IMR-90 (cell line): ENCODE measurements at regions of chr1 and their contacts with region 1.

Region 1: GRCh38 chr1:99707535-99708142 is 58.8 kb downstream of the FRRS1 start:
- DNase-seq: peak; percentile 65
- ATAC-seq: peak; percentile 97
- H3K4me3 ChIP-seq: no peak overlapping the region
- H3K27ac ChIP-seq: no peak overlapping the region
- H3K4me1 ChIP-seq: no peaks in the 10 kb centered on the region
- H3K27me3 ChIP-seq: no peaks in the 10 kb centered on the region
- CTCF ChIP-seq: peak; percentile 94
- POLR2A ChIP-seq: 0 out of 2 replicates have a peak, but pooled peaks have one; percentile 31
- RAD21 ChIP-seq: peak; percentile 98

Region 2: DNA sequence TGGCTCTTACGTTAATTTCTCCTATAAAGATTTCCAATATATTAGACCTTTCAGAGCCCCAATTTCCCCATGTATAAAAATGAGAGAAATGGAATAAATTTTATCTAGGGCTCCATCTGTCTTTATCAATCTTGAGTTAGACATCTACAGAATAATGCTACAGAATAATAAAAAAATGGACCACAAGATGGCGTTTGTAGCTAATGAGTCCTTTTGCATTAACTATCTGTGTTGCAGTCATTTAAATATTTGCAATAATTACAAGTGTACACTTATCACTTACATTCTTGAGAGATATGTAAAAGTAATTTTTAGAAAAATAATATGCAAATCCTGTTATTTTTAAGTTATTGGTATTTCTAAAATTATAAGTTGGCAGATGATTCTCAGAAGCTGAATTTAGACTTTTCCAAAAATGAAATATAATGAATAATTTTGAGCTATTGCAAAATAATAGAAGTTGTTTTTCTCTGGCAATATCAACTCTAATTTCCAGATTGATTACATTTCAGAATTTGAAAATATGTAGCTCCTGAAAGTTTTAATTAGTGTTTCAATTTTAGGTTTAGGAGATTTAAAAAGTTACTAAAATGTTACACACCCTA is 958.4 kb before region 1 on chr1:
- CTCF ChIA-PET with region 1: interaction called, 3 read pairs
- POLR2A ChIA-PET with region 1: no interaction called
- dilution Hi-C with region 1: no loop called
- in situ Hi-C with region 1: no loop called
- intact Hi-C with region 1: loop called (anchors 2 kb)
- DNase-seq: peak; percentile 7
- ATAC-seq: no peak; the same call in 1 of the 2 replicates
- H3K4me3 ChIP-seq: no peak overlapping the region
- H3K27ac ChIP-seq: no peak overlapping the region
- H3K4me1 ChIP-seq: no peaks in the 10 kb centered on the region
- H3K27me3 ChIP-seq: no peaks in the 10 kb centered on the region
- CTCF ChIP-seq: peak; percentile 48
- POLR2A ChIP-seq: no peak
- RAD21 ChIP-seq: peak; percentile 39; the same call in 1 of the 2 replicates

Region 3: GRCh38 chr1:98794196-98794886 is 913.3 kb before region 1 on chr1:
- CTCF ChIA-PET with region 1: no interaction called
- POLR2A ChIA-PET with region 1: no interaction called
- dilution Hi-C with region 1: no loop called
- in situ Hi-C with region 1: loop called (anchors 10 kb)
- intact Hi-C with region 1: loop called (anchors 2 kb)
- DNase-seq: peak; percentile 72
- ATAC-seq: peak; percentile 95
- H3K4me3 ChIP-seq: no peak overlapping the region
- H3K27ac ChIP-seq: no peak overlapping the region
- H3K4me1 ChIP-seq: no peaks in the 10 kb centered on the region
- H3K27me3 ChIP-seq: peaks cover 5% of the 10 kb centered on the region
- CTCF ChIP-seq: peak; percentile 81
- POLR2A ChIP-seq: no peak
- RAD21 ChIP-seq: peak; percentile 85

Region 4: GRCh38 chr1:98884864-98885263 is 822.8 kb before region 1 on chr1:
- CTCF ChIA-PET with region 1: no interaction called
- POLR2A ChIA-PET with region 1: no interaction called
- dilution Hi-C with region 1: no loop called
- in situ Hi-C with region 1: no loop called
- intact Hi-C with region 1: loop called (anchors 10 kb)
- DNase-seq: no peak
- ATAC-seq: no peak
- H3K4me3 ChIP-seq: no peak overlapping the region
- H3K27ac ChIP-seq: no peak overlapping the region
- H3K4me1 ChIP-seq: no peaks in the 10 kb centered on the region
- H3K27me3 ChIP-seq: no peaks in the 10 kb centered on the region
- CTCF ChIP-seq: no peak
- POLR2A ChIP-seq: no peak
- RAD21 ChIP-seq: 0 out of 2 replicates have a peak, but pooled peaks have one; percentile 12

Region 5: DNA sequence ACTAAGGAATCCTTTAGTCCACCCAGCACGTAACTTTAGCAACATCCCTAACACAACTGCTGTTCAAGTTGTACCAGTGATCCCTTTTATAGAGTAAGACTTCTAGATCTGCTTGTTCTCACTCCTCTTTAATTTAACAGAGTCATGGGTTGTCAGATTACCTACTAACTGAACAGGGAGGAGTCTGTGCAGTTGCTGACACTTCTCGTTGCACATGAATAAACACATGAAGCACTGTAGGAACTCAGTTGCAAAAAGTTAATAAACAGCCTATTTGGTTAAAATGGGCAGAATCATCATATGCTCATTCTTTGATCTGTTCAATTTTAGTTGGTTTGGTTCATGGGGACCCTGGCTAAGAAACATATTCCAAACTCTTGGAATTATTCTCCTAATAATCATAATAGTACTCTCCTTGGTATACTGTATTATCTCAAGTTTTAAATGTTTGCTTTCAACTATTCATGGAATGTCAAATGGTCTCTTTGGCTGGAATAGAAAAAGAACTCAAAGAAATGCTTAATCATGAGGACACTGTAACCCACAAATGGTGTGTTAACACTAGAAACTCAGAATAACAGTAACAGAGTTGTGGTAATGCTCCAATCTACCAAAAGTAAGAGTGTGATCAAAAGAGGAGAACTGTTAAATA is 718.6 kb before region 1 on chr1:
- CTCF ChIA-PET with region 1: no interaction called
- POLR2A ChIA-PET with region 1: no interaction called
- dilution Hi-C with region 1: no loop called
- in situ Hi-C with region 1: no loop called
- intact Hi-C with region 1: loop called (anchors 5 kb)
- DNase-seq: peak; percentile 15
- ATAC-seq: peak; percentile 77
- H3K4me3 ChIP-seq: no peak overlapping the region
- H3K27ac ChIP-seq: no peak overlapping the region; the same call in 1 of the 2 replicates
- H3K4me1 ChIP-seq: no peaks in the 10 kb centered on the region
- H3K27me3 ChIP-seq: no peaks in the 10 kb centered on the region
- CTCF ChIP-seq: no peak
- POLR2A ChIP-seq: no peak
- RAD21 ChIP-seq: no peak

Region 6: DNA sequence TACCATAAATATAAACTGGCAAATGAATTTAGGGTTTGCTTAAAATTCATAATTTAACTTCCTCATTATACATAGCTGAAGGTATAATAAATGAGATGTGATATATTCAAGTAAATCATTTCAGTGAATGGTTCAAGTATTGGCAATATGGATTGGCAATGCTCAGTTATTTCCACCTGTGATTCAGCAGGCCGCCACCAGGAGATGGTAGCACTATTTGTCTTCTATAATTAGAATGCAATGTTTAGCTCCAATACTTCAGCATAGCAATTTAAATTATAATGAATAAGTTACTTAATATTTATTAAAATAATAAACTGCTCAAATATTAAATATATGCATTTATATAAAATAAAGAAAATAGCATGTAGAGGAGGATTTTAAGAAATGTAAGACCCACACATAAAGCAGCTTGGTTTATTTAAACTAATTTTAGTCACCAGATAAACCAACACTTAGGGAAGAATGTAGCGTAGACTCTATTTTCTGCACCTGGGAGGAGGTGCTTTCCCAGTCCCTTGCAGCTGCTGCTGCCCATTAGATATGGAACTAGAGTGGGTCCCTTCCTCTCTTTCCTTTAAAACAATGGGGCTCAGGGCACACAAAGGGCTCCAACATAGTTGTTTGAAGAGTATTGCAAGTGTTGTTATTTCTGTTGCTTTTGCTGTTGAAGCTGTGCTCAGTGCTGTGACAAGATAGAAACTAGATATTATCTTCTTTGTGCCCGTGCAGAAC is 381.3 kb before region 1 on chr1:
- CTCF ChIA-PET with region 1: no interaction called
- POLR2A ChIA-PET with region 1: no interaction called
- dilution Hi-C with region 1: no loop called
- in situ Hi-C with region 1: no loop called
- intact Hi-C with region 1: no loop called
- DNase-seq: no peak
- ATAC-seq: no peak
- H3K4me3 ChIP-seq: no peak overlapping the region
- H3K27ac ChIP-seq: no peak overlapping the region
- H3K4me1 ChIP-seq: no peaks in the 10 kb centered on the region
- H3K27me3 ChIP-seq: no peaks in the 10 kb centered on the region; the same call in none of the 2 replicates
- CTCF ChIP-seq: peak; percentile 20; the same call in 1 of the 2 replicates
- POLR2A ChIP-seq: no peak
- RAD21 ChIP-seq: peak; percentile 27; the same call in 1 of the 2 replicates

Region 7: GRCh38 chr1:99481391-99481996 is 226.1 kb before region 1 on chr1:
- CTCF ChIA-PET with region 1: interaction called, 9 read pairs
- POLR2A ChIA-PET with region 1: no interaction called
- dilution Hi-C with region 1: no loop called
- in situ Hi-C with region 1: no loop called
- intact Hi-C with region 1: loop called (anchors 1 kb)
- DNase-seq: peak; percentile 68
- ATAC-seq: peak; percentile 71; the same call in 1 of the 2 replicates
- H3K4me3 ChIP-seq: no peak overlapping the region
- H3K27ac ChIP-seq: no peak overlapping the region
- H3K4me1 ChIP-seq: no peaks in the 10 kb centered on the region
- H3K27me3 ChIP-seq: no peaks in the 10 kb centered on the region
- CTCF ChIP-seq: peak; percentile 83
- POLR2A ChIP-seq: no peak
- RAD21 ChIP-seq: peak; percentile 88

Region 8: GRCh38 chr1:99526926-99527477 is 180.6 kb before region 1 on chr1:
- CTCF ChIA-PET with region 1: interaction called, 5 read pairs
- POLR2A ChIA-PET with region 1: no interaction called
- dilution Hi-C with region 1: no loop called
- in situ Hi-C with region 1: no loop called
- intact Hi-C with region 1: loop called (anchors 5 kb)
- DNase-seq: peak; percentile 20
- ATAC-seq: no peak; the same call in 1 of the 2 replicates
- H3K4me3 ChIP-seq: no peak overlapping the region
- H3K27ac ChIP-seq: no peak overlapping the region
- H3K4me1 ChIP-seq: no peaks in the 10 kb centered on the region
- H3K27me3 ChIP-seq: no peaks in the 10 kb centered on the region
- CTCF ChIP-seq: peak; percentile 43
- POLR2A ChIP-seq: no peak
- RAD21 ChIP-seq: peak; percentile 36

Region 9: GRCh38 chr1:99728494-99729235 is 21.0 kb after region 1 on chr1:
- CTCF ChIA-PET with region 1: no interaction called
- POLR2A ChIA-PET with region 1: no interaction called
- dilution Hi-C with region 1: no loop called
- in situ Hi-C with region 1: no loop called
- intact Hi-C with region 1: no loop called
- DNase-seq: peak; percentile 28
- ATAC-seq: no peak
- H3K4me3 ChIP-seq: no peak overlapping the region
- H3K27ac ChIP-seq: no peak overlapping the region
- H3K4me1 ChIP-seq: peaks cover 5% of the 10 kb centered on the region; the same call in 1 of the 2 replicates
- H3K27me3 ChIP-seq: no peaks in the 10 kb centered on the region
- CTCF ChIP-seq: peak; percentile 58
- POLR2A ChIP-seq: no peak
- RAD21 ChIP-seq: no peak

Region 10: DNA sequence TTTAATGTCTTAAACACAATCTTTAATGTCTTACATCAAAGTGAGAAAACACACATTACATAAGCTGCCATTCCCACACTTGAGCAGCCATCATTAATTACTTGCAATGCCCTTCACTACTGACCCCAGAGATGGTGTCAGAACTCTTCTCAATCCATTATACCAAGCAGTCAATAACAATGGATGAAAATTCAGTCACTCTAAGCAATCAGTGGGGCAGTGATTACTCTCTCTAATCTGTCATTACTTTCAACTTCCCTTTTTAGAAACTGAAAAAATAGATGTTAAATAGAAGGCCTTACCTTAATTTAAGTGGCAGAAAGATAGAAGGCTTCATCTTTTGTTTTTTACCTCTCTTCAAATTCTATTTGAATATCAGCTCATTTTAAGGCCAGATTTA is 68.5 kb after region 1 on chr1:
- CTCF ChIA-PET with region 1: no interaction called
- POLR2A ChIA-PET with region 1: no interaction called
- dilution Hi-C with region 1: no loop called
- in situ Hi-C with region 1: no loop called
- intact Hi-C with region 1: no loop called
- DNase-seq: no peak
- ATAC-seq: no peak
- H3K4me3 ChIP-seq: no peak overlapping the region
- H3K27ac ChIP-seq: no peak overlapping the region
- H3K4me1 ChIP-seq: no peaks in the 10 kb centered on the region
- H3K27me3 ChIP-seq: peaks cover 3% of the 10 kb centered on the region; the same call in 1 of the 2 replicates
- CTCF ChIP-seq: no peak
- POLR2A ChIP-seq: no peak
- RAD21 ChIP-seq: no peak